ENCODE measurements at regions of chr17 and their contacts with region 1.

Region 1: DNA sequence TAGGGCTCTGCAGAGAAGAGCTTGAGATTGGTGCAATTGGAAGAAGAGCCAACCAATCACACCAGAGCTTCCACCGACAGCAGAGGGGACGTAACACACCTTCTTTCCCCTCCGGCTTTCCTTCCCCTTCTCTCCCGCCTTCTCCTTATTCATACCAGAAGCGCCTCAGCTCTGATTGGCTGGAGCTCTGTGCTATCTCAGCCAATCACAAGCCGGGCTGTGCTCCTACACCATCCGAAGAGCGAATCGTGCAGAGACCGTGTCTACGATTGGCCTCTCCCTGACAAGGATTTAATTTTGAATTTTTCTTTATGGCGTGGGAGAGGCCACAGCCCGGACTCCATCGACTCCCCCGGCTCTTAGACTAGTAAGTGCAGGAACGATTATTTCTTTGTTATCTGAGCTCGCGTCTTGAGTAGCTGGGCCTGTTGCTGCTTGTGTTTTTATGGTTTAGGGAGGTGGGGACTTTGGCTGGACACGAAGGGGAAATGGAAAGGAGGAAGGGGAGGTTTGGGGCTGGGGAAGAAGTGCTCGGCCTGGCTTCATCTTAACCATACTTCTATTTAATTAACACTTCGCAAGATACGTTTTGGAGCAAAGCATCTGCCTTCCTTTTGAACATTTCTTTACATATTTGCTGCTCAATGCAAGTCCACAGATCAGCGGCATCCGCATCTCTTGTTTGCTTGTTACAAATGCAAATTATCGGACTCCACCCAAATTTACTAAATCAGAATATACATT is at the start of gene PRR11:
- H3K4me3 Mint-ChIP-seq: no peak within 1 kb of the TSS
- H3K27ac Mint-ChIP-seq: no peak within 1 kb of the TSS
- H3K4me1 Mint-ChIP-seq: peaks cover 44% of the 10 kb centered on the region
- H3K27me3 Mint-ChIP-seq: no peaks in the 10 kb centered on the region

Region 2: GRCh38 chr17:59106463-59107305 is 48.9 kb before region 1 on chr17 and contains the start of gene TRIM37:
- intact Hi-C with region 1: loop called (anchors 2 kb)
- H3K4me3 Mint-ChIP-seq: peak within 1 kb of the TSS; percentile 84
- H3K27ac Mint-ChIP-seq: peak within 1 kb of the TSS; percentile 94
- H3K4me1 Mint-ChIP-seq: peaks cover 21% of the 10 kb centered on the region
- H3K27me3 Mint-ChIP-seq: no peaks in the 10 kb centered on the region

Region 3: DNA sequence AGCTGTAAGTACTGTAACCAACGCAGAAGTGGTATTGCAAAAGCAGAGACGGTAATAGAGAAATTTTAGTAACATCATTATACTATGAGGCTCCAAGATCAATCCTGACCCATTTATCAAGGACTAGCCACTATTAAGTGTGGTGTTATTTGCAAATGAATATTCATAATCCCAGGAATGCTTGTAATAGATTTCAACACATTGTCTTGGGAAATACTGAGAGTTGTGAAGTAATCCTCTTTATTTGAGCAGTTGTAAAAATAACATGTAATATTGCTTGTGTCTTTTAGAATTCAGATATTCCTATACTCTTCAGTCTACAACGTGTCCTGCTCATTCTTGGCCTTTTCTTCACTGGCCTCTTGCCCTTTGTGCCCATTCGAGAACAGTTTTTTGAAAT is 111.1 kb after region 1 on chr17:
- intact Hi-C with region 1: no loop called
- H3K4me3 Mint-ChIP-seq: no peak overlapping the region
- H3K27ac Mint-ChIP-seq: no peak overlapping the region
- H3K4me1 Mint-ChIP-seq: peaks cover 7% of the 10 kb centered on the region
- H3K27me3 Mint-ChIP-seq: no peaks in the 10 kb centered on the region

Region 4: GRCh38 chr17:59315866-59316265 is 160.3 kb after region 1 on chr17:
- intact Hi-C with region 1: no loop called
- H3K4me3 Mint-ChIP-seq: no peak overlapping the region
- H3K27ac Mint-ChIP-seq: no peak overlapping the region
- H3K4me1 Mint-ChIP-seq: peaks cover 8% of the 10 kb centered on the region
- H3K27me3 Mint-ChIP-seq: no peaks in the 10 kb centered on the region

Measured in dendritic cell treated with granulocyte-macrophage colony-stimulating factor and Interleukin-4, amounts not matched to agents 40 ng/mL and 50 ng/mL, for 4 days (primary cell).